Activated naive CD4-positive, alpha-beta T cell treated with anti-CD3 and anti-CD28 coated beads, Interleukin-2, amount 10 ng/mL, durations not matched to agents 7 days and 5 days (primary cell): ENCODE measurements at regions of chr1 and their contacts with region 1.

Region 1: GRCh38 chr1:168082008-168082876 is 54.5 kb downstream of the GPR161 start:
- DNase-seq: peak; percentile 82
- H3K4me3 Mint-ChIP-seq: no peak overlapping the region
- H3K27ac Mint-ChIP-seq: no peak overlapping the region
- H3K4me1 Mint-ChIP-seq: peaks cover 2% of the 10 kb centered on the region
- H3K27me3 Mint-ChIP-seq: no peaks in the 10 kb centered on the region

Region 2: DNA sequence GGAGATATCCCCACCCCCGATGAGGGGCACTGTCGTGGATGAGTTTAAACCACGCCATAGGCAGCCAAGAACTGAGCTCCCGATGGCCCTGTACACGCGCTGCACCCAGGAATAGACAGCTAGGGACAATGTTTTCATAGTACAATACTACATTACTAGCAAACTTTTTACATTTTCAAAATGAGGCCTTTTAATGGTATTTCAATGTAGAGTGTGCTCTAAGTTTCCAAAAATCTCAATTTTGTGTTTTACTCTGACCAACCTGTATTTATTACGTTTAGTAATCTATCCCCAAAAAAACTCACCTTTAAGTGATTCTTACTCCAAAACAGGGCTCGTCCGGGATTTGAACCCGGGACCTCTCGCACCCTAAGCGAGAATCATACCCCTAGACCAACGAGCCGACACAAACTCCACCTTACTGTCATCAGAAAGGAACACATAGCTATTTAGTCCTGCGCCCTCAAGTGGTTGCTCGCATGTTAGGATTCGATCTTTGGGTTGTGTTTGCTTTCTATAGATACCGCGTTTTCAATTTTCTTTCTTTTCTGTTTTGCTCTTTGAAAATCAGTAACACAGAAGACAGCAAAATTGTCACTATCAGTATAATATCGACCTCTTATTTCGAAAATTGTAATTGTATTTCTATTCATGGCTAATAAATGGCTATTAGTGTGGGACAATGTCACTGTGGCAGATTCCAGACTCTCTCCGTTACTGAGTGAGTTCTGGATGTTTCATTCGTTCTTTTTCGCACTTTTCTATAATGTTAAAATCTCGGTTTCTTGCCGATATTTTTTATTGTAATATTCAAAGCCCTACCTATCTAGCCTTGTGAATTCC is 366.9 kb before region 1 on chr1:
- CTCF ChIA-PET with region 1: interaction called, 22 read pairs
- DNase-seq: peak; percentile 94
- H3K4me3 Mint-ChIP-seq: peak overlapping the region; percentile 79
- H3K27ac Mint-ChIP-seq: peak overlapping the region; percentile 96
- H3K4me1 Mint-ChIP-seq: peaks cover 65% of the 10 kb centered on the region
- H3K27me3 Mint-ChIP-seq: peaks cover 25% of the 10 kb centered on the region

Region 3: DNA sequence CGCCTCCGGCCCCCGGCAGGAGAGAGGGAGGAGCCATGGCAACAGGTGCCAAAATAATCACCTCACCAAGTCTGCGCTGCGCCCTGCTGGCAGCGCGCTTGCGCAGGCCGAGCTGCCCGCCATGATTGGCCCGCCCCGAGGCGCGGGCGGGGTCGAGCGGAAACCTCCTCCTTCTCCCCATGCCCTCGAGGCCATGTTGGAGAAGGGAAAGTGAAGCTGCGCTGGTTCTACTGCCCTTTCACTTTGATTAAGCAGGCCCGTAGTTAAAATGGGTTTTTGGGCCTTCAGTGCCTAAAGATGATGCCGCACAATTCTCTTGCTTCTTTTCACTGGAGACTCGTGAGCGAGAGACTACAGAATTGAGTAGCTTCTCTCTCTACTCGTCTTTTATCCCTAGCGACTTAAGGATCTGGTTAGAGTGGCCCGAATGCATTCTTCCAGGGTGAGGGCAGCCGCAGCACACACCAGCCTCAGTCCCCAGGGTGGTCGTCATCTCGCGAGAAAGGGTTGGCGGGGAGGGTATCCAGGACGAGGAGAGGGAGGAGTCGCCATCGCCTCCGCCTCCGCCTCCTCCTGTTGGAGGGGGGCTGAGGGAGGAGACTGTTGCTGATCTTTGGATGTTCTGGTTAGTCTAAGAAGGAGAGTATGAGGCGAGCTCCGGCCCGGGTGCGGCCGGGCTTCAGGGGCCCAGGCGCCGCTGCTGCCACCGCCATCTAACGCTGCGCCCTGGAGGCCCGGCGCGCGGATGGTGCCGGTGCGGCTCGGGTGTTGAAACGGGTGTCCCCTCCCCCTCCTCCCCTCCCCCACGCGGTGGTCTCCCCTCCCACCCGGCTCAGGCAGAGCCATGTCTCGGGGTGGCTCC is 145.9 kb before region 1 on chr1 and contains the start of gene DCAF6:
- CTCF ChIA-PET with region 1: interaction called, 16 read pairs
- DNase-seq: peak; percentile 98
- H3K4me3 Mint-ChIP-seq: peak within 1 kb of the TSS; percentile 81
- H3K27ac Mint-ChIP-seq: peak within 1 kb of the TSS; percentile 92
- H3K4me1 Mint-ChIP-seq: peaks cover 31% of the 10 kb centered on the region
- H3K27me3 Mint-ChIP-seq: no peaks in the 10 kb centered on the region

Region 4: GRCh38 chr1:168065506-168065905 is 16.7 kb before region 1 on chr1:
- CTCF ChIA-PET with region 1: interaction called, 10 read pairs
- DNase-seq: no peak
- H3K4me3 Mint-ChIP-seq: no peak overlapping the region
- H3K27ac Mint-ChIP-seq: no peak overlapping the region
- H3K4me1 Mint-ChIP-seq: no peaks in the 10 kb centered on the region
- H3K27me3 Mint-ChIP-seq: no peaks in the 10 kb centered on the region

Region 5: DNA sequence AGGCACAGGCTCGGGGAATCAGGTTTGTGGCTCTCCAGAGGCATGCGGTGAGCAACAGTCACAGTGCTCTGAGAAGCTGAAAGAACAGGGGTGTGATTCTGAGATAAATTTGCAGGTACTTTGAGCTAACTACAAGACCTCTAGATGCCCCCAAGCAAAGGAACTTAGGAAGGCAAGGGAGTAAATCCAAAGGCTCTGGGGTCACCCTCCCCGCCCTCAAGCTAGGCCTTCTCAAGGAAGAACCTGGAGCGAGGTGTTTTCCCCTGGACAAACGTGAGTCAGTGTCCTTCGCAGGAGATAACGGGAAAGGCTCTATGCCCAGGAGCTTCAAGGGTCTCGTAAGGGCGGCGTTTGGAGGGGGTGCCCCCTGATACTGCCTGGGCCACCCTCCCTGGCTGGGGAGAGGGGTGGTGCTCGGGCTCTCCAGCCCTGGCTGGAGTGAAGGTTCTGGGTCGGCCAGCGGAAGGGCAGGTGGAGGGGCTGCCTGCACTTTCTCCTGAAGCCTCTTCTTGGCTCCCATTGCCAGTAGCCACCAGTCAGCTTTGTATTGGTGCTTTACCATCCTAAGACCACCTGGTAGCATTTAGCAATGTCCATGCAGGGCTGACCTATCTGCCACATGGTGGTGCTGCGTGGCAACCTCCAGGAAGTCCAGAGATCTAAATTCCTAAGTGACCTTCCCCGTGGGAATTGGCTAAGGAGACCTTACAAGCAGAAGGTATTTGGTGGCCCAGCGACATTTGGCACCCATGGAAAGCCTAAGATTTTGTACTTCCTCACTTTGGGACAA is 10.5 kb after region 1 on chr1:
- CTCF ChIA-PET with region 1: interaction called, 13 read pairs
- DNase-seq: no peak
- H3K4me3 Mint-ChIP-seq: no peak overlapping the region
- H3K27ac Mint-ChIP-seq: no peak overlapping the region
- H3K4me1 Mint-ChIP-seq: no peaks in the 10 kb centered on the region
- H3K27me3 Mint-ChIP-seq: peaks cover 20% of the 10 kb centered on the region

Region 6: GRCh38 chr1:168321945-168322344 is 239.7 kb after region 1 on chr1:
- CTCF ChIA-PET with region 1: interaction called, 17 read pairs
- DNase-seq: no peak
- H3K4me3 Mint-ChIP-seq: no peak overlapping the region
- H3K27ac Mint-ChIP-seq: no peak overlapping the region
- H3K4me1 Mint-ChIP-seq: peaks cover 19% of the 10 kb centered on the region
- H3K27me3 Mint-ChIP-seq: no peaks in the 10 kb centered on the region